Body of pancreas (tissue), 4 donors: ENCODE measurements at regions of chr17 and their contacts with region 1.

Region 1: GRCh38 chr17:42928714-42929496 is 28.3 kb downstream of the G6PC1 start:
- DNase-seq: peak; percentile 60 to 86 (median 74)
- ATAC-seq: peak; percentile 96
- H3K4me3 ChIP-seq: no peak overlapping the region
- H3K27ac ChIP-seq: peak overlapping the region; percentile 57 to 77 (median 76)
- H3K4me1 ChIP-seq: peaks cover 9% of the 10 kb centered on the region
- H3K27me3 ChIP-seq: no peaks in the 10 kb centered on the region
- CTCF ChIP-seq: peak; percentile 43 to 91 (median 83)
- POLR2A ChIP-seq: no peak

Region 2: GRCh38 chr17:42846614-42847282 is 82.2 kb before region 1 on chr17:
- intact Hi-C with region 1: loop called (anchors 5 kb)
- DNase-seq: peak in 2 of 4 donors; percentile 10 to 32
- ATAC-seq: no peak
- H3K4me3 ChIP-seq: no peak overlapping the region
- H3K27ac ChIP-seq: peak overlapping the region in 1 of 4 donors; percentile 11
- H3K4me1 ChIP-seq: peaks cover 14% of the 10 kb centered on the region
- H3K27me3 ChIP-seq: no peaks in the 10 kb centered on the region
- CTCF ChIP-seq: no peak
- POLR2A ChIP-seq: no peak